PC-9 (cell line): ENCODE measurements at regions of chr19 and their contacts with region 1.

Region 1: GRCh38 chr19:4500841-4501591 is 17.3 kb downstream of the PLIN4 start:
- DNase-seq: no peak
- H3K4me3 ChIP-seq: no peak overlapping the region
- H3K27ac ChIP-seq: no peak overlapping the region
- H3K4me1 ChIP-seq: no peaks in the 10 kb centered on the region
- H3K27me3 ChIP-seq: no peaks in the 10 kb centered on the region
- CTCF ChIP-seq: no peak

Region 2: GRCh38 chr19:3804429-3804828 is 696.6 kb before region 1 on chr19:
- CTCF ChIA-PET with region 1: interaction called, 15 read pairs
- POLR2A ChIA-PET with region 1: no interaction called
- intact Hi-C with region 1: no loop called
- DNase-seq: no peak
- H3K4me3 ChIP-seq: no peak overlapping the region
- H3K27ac ChIP-seq: no peak overlapping the region
- H3K4me1 ChIP-seq: no peaks in the 10 kb centered on the region
- H3K27me3 ChIP-seq: peaks cover 9% of the 10 kb centered on the region
- CTCF ChIP-seq: no peak

Region 3: GRCh38 chr19:4638828-4639530 is 138.0 kb after region 1 on chr19 and contains the start of gene TNFAIP8L1:
- CTCF ChIA-PET with region 1: no interaction called
- POLR2A ChIA-PET with region 1: no interaction called
- intact Hi-C with region 1: no loop called
- DNase-seq: peak; percentile 60 to 93
- H3K4me3 ChIP-seq: peak within 1 kb of the TSS; percentile 51; the same call in 1 of the 2 replicates
- H3K27ac ChIP-seq: no peak within 1 kb of the TSS
- H3K4me1 ChIP-seq: no peaks in the 10 kb centered on the region
- H3K27me3 ChIP-seq: no peaks in the 10 kb centered on the region
- CTCF ChIP-seq: no peak
- total RNA-seq, gene TNFAIP8L1: 17.8 and 18.6 TPM in 2 replicates